OCI-LY7 (cell line): ENCODE measurements at regions of chr3 and their contacts with region 1.

Region 1: GRCh38 chr3:156837115-156837514 is 11.0 kb downstream of the LEKR1 start:
- DNase-seq: no peak
- H3K4me3 ChIP-seq: no peak overlapping the region
- H3K27ac ChIP-seq: no peak overlapping the region
- H3K4me1 ChIP-seq: no peaks in the 10 kb centered on the region
- CTCF ChIP-seq: no peak

Region 2: DNA sequence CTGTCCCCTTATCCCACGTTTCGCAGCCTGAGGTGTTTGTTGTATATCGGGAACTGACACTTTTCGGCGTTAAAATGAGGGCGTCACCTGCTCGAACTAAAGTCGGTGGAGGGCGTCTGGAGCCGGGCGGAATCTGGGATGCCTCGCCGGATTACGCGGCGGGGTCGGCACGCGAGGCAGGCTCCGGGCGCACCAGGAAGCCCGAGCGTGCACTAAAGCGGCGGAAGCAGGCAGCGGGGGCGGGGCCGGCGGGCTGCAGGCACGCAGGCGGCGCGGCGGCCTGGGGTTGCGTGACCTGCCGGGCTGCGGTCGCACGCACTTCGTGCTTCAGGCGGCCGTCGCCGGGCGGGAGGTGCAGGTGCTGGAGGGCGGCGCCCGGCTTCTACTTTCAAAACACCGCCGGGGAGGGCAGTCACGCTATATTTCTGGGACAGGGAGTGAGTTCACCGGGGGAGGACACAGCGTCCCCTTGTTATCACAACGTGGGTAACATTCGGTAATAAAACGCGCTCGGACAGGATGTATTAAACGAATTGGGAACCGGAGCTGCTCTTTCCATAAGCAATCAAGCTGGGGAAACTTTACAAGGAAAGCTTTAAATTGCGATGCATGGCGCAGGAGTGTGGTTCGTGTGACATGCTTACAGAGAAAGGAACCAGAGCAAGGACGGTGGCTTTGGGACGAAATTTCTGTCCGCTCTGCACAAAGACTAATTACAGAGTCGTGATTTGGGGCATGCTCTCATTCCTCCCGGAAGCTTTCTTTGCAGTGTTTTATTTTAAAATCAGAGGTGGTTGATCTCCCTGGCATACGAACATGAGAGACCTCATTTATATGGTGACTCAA is 20.1 kb before region 1 on chr3:
- CTCF ChIA-PET with region 1: no interaction called
- POLR2A ChIA-PET with region 1: interaction called, 10 read pairs
- intact Hi-C with region 1: no loop called
- DNase-seq: peak; percentile 72
- H3K4me3 ChIP-seq: peak overlapping the region; percentile 65
- H3K27ac ChIP-seq: no peak overlapping the region
- H3K4me1 ChIP-seq: peaks cover 6% of the 10 kb centered on the region
- CTCF ChIP-seq: no peak; the same call in 1 of the 2 replicates